Dorsolateral prefrontal cortex (tissue), 120 donors: ENCODE measurements at regions of chr14 and their contacts with region 1.

Region 1: DNA sequence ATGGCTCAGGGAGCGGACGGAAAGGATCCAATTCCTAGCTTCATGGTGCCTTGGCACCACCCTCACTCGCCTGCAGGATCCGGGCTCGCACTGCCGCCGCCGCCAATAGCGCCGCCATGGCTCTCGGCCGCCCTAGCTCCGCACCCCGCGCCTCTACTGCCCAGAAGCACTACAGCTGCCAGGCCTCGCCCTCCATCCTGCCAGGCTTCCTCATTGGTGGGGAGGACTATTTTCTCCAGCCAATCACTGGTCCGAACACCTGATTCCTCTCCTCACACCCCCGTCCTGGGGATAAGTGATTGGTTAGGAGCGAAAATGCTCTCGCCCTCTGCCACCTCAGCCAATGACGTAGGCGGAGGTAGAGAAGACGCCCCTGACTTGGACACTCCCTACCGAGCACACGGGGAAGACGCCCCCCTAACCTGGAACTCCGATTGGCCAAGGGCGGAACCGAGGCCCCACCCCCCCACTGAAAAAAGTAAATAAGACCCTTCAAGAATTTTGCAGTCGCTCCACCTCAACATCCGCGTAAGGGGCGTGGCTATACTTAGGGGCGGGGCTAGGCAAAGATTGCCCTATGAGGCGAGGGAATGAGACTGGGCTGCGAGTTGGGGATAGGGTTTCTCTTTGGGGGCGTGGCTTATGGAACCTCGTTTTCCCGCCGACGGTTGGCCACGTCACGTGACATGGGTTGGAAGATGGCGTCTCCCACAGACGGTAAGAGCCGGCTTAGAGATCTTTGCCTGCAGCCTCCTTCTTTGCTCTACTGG is at the starts of genes ALDH6A1 and LIN52:
- DNase-seq: peak; percentile 95 to 99 (median 98)
- H3K4me3 ChIP-seq: peak within 1 kb of the TSS; percentile 58 to 100 (median 91)
- H3K27ac ChIP-seq: peak within 1 kb of the TSS; percentile 50 to 96 (median 89)
- H3K27me3 ChIP-seq: no peaks in the 10 kb centered on the region
- CTCF ChIP-seq: peak in 40 of 56 donors; percentile 5 to 52 (median 28)
- total RNA-seq, gene ALDH6A1: 75.5 to 294 (median 134) TPM
- total RNA-seq, gene LIN52: 11.0 to 26.1 (median 17.0) TPM

Region 2: GRCh38 chr14:73058224-73058921 is 1026.1 kb before region 1 on chr14 and contains the start of gene RBM25:
- intact Hi-C with region 1: no loop called
- DNase-seq: peak; percentile 94 to 99 (median 96)
- H3K4me3 ChIP-seq: peak within 1 kb of the TSS; percentile 59 to 98 (median 89)
- H3K27ac ChIP-seq: peak within 1 kb of the TSS; percentile 79 to 99 (median 96)
- H3K27me3 ChIP-seq: no peaks in the 10 kb centered on the region
- CTCF ChIP-seq: peak in 54 of 56 donors; percentile 34 to 80 (median 55)
- total RNA-seq, gene RBM25: 73.2 to 124 (median 94.5) TPM

Region 3: DNA sequence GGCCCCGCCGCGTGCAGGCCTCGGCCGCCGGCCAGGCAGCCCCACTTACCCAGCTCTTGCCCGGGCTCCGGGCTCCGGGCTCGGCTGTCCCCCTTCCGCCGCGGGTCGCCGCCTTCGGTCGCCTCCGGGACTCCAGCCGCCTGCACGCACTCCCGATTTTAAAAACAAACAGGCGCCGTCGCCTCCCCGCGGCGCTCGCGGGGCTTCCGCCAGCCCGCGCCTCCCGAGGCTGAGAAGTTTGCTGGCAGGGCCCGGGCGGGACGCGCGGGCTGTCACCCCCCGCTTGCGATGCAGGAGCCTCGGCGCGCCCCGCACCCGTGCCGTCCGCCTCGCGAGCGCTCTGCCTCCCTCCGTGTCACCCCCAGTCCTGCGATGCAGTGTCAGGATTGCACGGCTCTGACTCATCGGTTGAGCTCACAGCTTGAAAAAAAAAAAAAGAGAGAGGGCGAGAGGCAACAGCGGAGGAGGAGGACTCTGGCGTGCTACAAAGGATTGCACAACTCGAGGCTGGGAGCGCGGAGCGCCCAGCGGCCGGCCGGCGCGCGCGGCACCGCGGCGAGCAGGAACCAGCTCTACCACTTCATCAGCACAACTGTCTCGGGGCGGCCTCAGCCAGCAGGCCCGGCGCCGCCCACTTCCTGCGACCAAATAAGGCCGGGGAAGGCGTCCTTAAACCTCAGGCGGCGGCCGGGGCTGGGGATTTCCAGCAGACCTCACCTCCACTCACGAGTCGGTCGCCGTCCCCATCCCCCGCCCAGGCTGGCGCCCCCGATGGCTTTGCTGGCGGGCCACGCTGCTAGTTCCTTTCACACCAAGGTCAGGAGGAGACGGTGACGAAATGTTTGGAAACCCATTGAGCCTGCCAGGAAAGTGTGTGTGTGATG is 324.5 kb before region 1 on chr14:
- intact Hi-C with region 1: loop called in 1 of 2 experiments (anchors 5 kb)
- DNase-seq: peak; percentile 80 to 95 (median 93)
- H3K4me3 ChIP-seq: peak overlapping the region; percentile 42 to 88 (median 77)
- H3K27ac ChIP-seq: peak overlapping the region; percentile 75 to 99 (median 96)
- H3K27me3 ChIP-seq: no peaks in the 10 kb centered on the region
- CTCF ChIP-seq: peak in 31 of 56 donors; percentile 4 to 46 (median 26)

Region 4: GRCh38 chr14:74018586-74019407 is 65.7 kb before region 1 on chr14 and contains the starts of genes BBOF1 and ENTPD5:
- intact Hi-C with region 1: loop called (anchors 2 to 10 kb)
- DNase-seq: peak; percentile 73 to 94 (median 83)
- H3K4me3 ChIP-seq: peak within 1 kb of the TSS; percentile 66 to 98 (median 92)
- H3K27ac ChIP-seq: peak within 1 kb of the TSS; percentile 59 to 98 (median 90)
- H3K27me3 ChIP-seq: no peaks in the 10 kb centered on the region
- CTCF ChIP-seq: peak in 18 of 56 donors; percentile 4 to 41 (median 19)
- total RNA-seq, gene BBOF1: 4.1 to 17.0 (median 9.4) TPM
- total RNA-seq, gene ENTPD5: 6.0 to 19.1 (median 11.0) TPM

Region 5: DNA sequence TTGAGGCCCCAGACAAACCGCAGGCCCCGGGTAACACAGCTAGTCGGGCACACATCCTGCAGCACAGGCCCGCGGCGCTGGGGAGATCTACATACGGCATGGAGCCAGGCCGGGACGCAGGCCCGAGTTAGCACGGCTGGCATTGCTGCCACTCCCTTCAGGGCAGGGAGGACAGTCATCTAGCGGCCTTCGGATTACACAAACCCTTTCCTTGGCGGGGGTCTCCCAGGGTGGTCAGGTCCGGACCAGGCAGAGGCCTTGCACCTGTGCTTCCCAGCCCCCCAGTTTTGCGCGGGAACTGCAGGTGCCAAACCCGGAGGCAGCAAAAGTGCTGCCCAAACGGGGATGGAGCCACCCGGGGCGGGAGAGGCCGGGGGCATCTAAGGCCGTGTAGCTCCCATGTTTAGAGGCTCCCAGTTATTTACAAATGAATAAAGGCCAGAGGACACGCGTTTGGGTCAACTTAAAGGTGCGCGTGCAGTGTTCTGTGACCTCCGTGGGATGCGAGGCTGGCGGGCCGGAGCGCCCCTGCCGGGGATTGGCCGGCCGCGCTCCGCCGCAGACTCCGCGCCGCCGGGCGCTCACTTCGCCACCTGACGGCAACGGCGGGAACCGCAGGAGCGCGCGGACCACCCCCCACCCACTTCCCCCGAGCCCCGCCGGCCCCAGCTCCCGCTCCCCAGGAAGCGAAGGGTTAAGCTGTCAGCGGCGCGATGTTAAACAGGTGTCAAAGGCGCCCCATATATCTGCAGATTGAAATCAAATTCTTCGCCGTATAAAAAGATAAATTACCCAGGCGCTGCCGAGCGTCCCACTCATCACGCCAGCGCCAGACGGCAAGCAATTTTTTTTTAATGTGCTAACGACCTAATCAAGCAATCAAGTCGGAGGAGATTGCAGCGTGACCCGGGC is 172.9 kb after region 1 on chr14:
- intact Hi-C with region 1: loop called in 1 of 2 experiments (anchors 10 kb)
- DNase-seq: peak in 6 of 10 donors; percentile 17 to 65 (median 56)
- H3K4me3 ChIP-seq: peak overlapping the region; percentile 45 to 98 (median 75)
- H3K27ac ChIP-seq: peak overlapping the region in 10 of 59 donors; percentile 3 to 78 (median 68)
- H3K27me3 ChIP-seq: no peaks in the 10 kb centered on the region
- CTCF ChIP-seq: peak; percentile 72 to 99 (median 96)

Region 6: DNA sequence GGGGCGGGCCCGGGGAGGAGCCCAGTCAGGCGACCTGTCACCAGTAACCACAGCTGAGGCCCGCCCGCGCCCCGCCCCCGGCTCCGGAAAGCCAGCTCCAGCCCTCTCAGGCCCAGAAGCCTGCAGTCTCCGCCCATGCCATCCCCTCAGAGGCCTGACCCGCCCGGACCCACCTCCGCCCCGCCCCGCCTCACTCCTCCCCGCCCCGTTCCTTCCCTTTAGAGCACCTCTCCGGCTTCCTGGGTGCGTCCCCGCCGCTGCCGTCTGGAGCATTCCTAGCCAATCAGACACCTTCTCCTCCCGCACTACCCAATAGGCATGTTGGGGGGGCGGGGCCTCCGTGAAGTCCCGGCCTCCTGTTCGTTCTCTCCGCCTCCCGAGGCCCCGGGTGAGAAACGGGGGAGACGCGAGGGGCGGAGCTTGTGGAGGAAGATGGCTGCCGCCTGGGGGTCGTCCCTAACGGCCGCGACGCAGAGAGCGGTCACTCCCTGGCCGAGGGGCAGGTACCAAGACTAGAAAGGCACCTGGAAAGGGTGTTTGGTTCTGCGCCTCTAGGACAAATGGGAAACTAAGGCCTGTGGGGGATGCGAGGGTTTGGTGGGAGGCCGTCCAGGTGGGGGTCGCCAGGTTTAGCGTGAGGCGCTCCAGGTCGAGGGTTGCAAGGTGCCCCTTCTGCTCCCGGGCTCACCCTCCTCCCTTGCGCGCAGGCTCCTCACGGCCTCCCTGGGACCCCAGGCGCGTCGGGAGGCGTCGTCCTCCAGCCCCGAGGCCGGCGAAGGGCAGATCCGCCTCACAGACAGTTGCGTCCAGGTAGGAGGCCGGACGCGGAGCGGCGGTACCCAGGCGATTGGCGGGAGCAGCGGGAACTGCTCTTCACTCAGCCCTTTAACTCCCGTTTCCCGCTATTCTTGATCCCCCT is 409.1 kb after region 1 on chr14 and contains the start of gene ISCA2:
- intact Hi-C with region 1: loop called in 1 of 2 experiments (anchors 2 kb)
- DNase-seq: peak; percentile 96 to 100 (median 98)
- H3K4me3 ChIP-seq: peak within 1 kb of the TSS; percentile 74 to 100 (median 94)
- H3K27ac ChIP-seq: peak within 1 kb of the TSS; percentile 61 to 96 (median 87)
- H3K27me3 ChIP-seq: no peaks in the 10 kb centered on the region
- CTCF ChIP-seq: peak in 25 of 56 donors; percentile 4 to 47 (median 18)
- total RNA-seq, gene ISCA2: 16.2 to 34.8 (median 23.3) TPM